Endothelial cell of umbilical vein (primary cell): ENCODE measurements at regions of chr2 and their contacts with region 1.

Region 1: DNA sequence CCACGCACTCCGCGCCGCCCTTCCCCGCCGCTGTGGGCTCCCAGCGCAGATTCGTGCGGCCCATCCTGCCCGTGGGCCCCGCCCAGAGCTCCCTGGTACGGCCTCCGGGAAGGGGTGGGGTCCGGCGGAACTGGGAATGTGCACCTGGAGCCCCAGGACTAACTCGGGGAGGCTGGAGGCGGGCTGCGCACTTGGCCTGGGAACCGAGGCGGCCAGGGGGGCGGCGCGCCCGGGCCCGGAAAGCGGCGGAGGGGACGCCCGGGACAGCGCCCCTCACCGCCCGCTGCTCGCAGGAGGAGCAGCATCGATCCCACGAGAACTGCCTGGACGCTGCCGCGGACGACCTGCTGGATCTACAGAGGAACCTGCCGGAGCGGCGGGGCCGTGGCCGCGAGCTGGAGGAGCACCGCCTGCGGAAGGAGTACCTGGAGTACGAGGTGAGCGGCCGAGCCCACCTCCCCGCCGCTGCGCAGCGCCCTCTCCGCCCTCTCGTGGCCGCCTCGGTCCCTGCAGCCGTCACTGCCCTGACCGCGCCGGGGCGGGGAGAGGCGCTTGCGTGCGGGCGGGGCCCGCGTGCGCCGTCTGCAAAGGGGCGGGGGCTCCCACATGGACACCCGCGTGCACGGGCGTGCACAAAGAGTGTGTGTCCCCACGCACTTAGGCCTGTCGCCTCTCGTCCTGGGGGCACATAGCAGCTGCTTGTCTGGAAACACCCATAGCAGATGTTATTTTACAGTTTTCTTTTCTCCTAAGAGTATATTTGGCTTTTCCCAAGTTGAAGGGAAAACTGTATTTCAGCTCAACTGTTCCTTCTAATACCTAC is 25.2 kb downstream of the PSD4 start:
- DNase-seq: peak; percentile 62
- H3K4me3 ChIP-seq: peak overlapping the region; percentile 37 to 57 (median 55)
- H3K27ac ChIP-seq: no peak overlapping the region
- H3K4me1 ChIP-seq: peaks cover 6% of the 10 kb centered on the region
- H3K27me3 ChIP-seq: peaks cover 0 to 1% of the 10 kb centered on the region in 2 experiments
- CTCF ChIP-seq: peak; percentile 89 to 91
- POLR2A ChIP-seq: no peak

Region 2: DNA sequence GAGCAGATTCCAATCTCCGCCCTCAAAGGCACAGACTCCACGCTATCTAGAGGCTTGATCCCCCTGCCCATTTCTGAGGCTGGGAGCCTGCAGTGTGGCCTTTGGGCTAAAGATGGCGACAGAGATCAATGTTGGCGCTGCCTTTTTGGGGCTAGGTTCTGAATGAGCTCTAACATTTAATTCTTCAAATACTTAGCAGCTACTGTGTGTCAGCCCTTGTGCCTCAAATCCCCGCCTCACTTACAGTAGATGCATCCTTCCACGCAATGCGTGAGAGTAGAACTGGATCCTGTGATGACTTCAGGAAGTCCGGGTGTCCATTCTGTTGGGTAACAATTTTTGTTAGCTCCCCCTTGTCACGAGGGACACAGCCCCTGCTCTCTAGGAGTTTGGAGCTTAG is 118.9 kb before region 1 on chr2:
- CTCF ChIA-PET with region 1: interaction called, 63 read pairs
- POLR2A ChIA-PET with region 1: no interaction called
- dilution Hi-C with region 1: no loop called
- intact Hi-C with region 1: loop called (anchors 1 kb)
- DNase-seq: peak; percentile 17
- H3K4me3 ChIP-seq: no peak overlapping the region
- H3K27ac ChIP-seq: no peak overlapping the region
- H3K4me1 ChIP-seq: no peaks in the 10 kb centered on the region
- H3K27me3 ChIP-seq: peaks cover 3 to 10% of the 10 kb centered on the region in 2 experiments
- CTCF ChIP-seq: peak; percentile 46 to 58
- POLR2A ChIP-seq: no peak

Region 3: DNA sequence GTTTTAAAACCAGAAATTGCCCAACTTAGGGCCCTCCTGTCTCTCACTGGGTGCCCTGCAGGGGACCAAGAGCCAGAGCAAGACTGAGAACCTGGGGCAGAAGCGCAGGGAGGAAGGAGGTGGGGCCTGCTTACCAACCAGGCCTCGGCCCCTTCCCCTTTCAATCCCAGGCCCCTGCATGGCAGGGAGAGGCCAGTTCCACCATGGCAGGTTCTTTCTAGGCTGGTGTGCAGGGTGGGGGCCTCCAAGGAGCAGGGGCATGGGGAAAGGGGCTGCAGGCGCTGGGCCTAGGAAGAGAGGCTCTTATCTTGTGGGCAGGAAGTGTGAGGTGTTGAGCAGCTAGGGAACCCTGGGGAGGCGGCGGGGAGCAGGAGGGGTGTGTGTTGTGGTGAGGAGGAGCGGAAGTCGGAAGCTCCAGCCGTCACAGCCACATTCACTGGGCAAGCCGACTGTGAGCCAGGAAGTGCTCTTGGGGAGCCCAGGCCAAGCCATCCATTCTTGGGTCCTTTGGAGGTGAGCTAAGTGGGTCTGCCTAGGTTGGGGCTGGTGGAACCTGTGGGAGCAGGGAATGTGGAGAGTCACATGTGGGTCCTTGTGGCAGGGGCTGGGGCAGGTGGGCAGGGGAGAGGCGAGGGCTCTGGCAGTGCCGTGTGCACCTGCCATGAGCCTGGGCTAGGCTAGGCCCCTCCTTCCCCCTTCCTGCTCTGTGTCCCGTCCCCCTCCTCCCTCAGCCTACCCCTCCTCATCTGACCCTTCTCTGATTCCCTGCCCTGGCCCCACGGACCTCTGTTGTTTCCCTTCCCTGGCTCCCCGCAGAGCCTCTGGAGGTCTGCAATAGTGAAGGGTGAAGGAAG is 25.2 kb before region 1 on chr2 and contains the start of gene PSD4:
- CTCF ChIA-PET with region 1: interaction called, 15 read pairs
- POLR2A ChIA-PET with region 1: no interaction called
- dilution Hi-C with region 1: no loop called
- intact Hi-C with region 1: no loop called
- DNase-seq: no peak
- H3K4me3 ChIP-seq: no peak within 1 kb of the TSS
- H3K27ac ChIP-seq: no peak within 1 kb of the TSS
- H3K4me1 ChIP-seq: no peaks in the 10 kb centered on the region
- H3K27me3 ChIP-seq: peaks cover 0 to 7% of the 10 kb centered on the region in 2 experiments
- CTCF ChIP-seq: no peak
- POLR2A ChIP-seq: no peak
- total RNA-seq, gene PSD4: 0.09 and 0.24 TPM in 2 replicates

Region 4: DNA sequence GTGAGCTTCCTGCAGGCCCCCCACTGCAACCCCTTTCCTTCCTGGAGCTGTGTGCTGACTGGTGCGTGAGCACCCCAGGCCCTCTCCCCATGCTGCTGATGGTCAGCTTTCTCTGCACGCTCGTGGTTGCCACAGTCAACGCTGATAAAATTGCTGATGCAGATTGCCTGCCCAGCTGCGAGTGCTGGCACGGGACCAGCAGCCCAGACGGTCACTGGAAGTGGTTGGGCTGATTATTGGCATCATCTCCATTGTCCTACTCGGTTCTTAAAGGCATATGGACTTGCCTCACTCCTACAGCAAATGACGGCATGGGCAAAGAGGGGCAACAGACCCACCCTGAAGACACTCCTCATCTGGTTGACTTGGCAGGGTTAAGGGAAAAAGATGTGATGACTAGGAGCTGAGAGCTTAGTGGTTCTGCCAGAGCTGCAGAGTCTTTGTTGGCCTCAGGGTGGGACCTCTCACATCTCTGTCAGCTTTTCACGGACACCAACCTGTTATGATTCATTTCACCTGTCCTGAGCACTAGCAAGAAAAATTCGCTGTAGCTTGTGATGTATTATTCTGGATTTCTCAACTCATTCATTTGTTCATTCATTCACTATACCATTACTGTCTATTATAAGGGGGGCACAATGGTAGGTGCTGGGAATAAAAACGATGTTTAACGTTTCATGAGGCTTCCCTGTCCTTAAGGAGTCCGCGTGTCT is 41.3 kb after region 1 on chr2:
- CTCF ChIA-PET with region 1: interaction called, 109 read pairs
- POLR2A ChIA-PET with region 1: no interaction called
- dilution Hi-C with region 1: no loop called
- intact Hi-C with region 1: loop called (anchors 1 kb)
- DNase-seq: peak; percentile 89
- H3K4me3 ChIP-seq: no peak overlapping the region
- H3K27ac ChIP-seq: peak overlapping the region; percentile 32
- H3K4me1 ChIP-seq: peaks cover 19% of the 10 kb centered on the region
- H3K27me3 ChIP-seq: no peaks in the 10 kb centered on the region
- CTCF ChIP-seq: no peak
- POLR2A ChIP-seq: no peak

Region 5: DNA sequence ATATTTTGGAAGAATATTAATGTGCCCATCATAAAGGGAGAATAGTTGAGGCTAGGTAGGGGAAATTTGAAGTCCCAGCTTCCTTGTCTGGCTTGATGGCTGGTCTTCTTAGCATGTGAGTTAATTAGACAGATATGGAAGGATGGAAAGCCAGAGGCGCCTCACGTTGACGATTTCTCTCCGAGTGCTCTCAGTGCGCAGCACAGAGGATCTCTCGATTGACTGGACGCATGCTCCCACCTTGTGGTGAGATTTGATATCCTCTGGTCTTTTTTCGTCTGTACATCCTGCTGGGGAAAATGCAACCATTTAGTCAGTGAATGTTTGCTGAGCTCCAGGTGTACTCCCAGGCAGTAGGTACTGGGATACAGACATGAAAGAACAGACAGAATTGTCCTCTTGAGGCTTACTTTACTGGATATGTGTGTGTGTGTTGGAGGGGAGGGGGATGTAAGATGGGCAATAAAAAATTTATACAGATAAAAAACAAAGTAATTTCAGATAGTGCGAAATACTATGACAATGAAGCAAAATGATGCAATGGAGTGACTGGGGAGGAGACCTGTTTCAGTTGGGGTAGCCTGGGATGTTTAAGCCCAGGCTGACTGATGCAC is 171.6 kb after region 1 on chr2:
- CTCF ChIA-PET with region 1: interaction called, 44 read pairs
- POLR2A ChIA-PET with region 1: no interaction called
- dilution Hi-C with region 1: no loop called
- intact Hi-C with region 1: loop called (anchors 1 kb)
- DNase-seq: peak; percentile 61
- H3K4me3 ChIP-seq: no peak overlapping the region
- H3K27ac ChIP-seq: no peak overlapping the region
- H3K4me1 ChIP-seq: no peaks in the 10 kb centered on the region
- H3K27me3 ChIP-seq: no peaks in the 10 kb centered on the region
- CTCF ChIP-seq: peak; percentile 44 to 50
- POLR2A ChIP-seq: no peak